HepG2 (cell line): ENCODE measurements at regions of chr3 and their contacts with region 1.

Region 1: DNA sequence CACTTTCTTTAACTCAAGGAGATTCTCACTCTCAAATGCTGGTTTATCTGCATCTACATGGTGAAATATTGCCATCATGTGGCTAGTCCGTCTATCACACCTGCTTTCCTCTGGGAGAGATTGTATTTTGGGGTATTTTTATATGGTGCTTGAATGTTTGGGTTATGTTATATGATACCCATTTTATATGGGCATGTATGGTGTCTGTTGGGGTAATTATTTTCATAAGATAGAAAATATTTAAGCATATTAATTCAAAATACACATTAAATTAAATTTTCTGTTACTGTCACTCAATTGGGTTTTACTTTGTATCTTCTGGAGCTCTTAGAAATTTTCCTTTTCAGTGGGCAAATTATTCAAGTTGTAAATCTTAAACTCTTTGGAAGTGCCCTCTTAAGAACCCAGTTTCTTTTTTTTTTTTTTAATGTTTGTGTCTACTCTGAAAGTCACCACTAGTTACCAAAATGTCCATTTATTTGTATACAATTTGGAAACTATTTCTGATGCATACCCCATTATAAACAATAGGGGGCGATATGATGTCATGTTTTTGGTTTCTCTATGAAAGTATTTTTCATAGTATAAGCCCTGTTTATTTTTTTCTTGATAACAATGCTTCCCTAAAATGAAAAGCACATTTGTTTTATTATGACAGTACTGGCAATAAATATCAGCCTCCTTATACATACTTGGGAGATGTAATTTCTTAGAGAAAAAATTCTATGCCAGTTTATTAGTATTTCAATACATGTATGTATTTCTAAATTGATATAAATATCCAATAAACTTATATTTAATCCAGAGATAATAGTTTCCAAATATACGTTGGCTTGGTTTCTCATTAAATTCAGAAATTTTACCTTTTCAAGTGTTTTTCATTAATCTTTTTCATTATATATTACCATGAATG is 36.1 kb upstream of the PLSCR5 start:
- DNase-seq: peak; percentile 56
- ATAC-seq: peak; percentile 64
- H3K4me3 ChIP-seq: no peak overlapping the region
- H3K27ac ChIP-seq: no peak overlapping the region
- H3K4me1 ChIP-seq: peaks cover 29% of the 10 kb centered on the region
- H3K27me3 ChIP-seq: no peaks in the 10 kb centered on the region
- CTCF ChIP-seq: peak; percentile 79
- EP300 ChIP-seq: no peak
- POLR2A ChIP-seq: no peak
- RAD21 ChIP-seq: peak; percentile 62

Region 2: DNA sequence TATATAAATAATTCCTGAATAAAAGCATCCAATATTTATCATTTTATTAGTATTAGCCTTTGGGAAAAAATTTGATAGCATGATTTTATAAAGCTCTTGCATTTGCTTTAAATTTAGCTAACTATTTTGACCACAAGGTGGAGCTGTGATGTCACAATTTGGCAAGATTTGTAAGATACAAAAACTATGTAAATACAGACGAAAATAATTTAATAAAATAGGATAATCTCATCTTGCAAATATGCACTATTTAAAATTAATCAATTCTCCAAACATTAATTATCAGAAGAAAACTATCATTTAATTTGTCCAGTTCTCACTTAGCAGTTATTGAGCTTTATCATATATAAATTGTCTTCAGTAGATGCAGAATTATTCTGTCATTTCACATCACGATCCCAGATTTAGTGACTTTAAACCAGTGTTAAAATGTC is 575.6 kb before region 1 on chr3:
- CTCF ChIA-PET with region 1: no interaction called
- POLR2A ChIA-PET with region 1: no interaction called
- in situ Hi-C with region 1: no loop called
- intact Hi-C with region 1: loop called (anchors 10 kb)
- DNase-seq: peak; percentile 50
- ATAC-seq: no peak
- H3K4me3 ChIP-seq: no peak overlapping the region
- H3K27ac ChIP-seq: no peak overlapping the region
- H3K4me1 ChIP-seq: no peaks in the 10 kb centered on the region
- H3K27me3 ChIP-seq: no peaks in the 10 kb centered on the region; a peak in 1 of 5 replicates
- CTCF ChIP-seq: peak; percentile 49
- EP300 ChIP-seq: no peak
- POLR2A ChIP-seq: no peak
- RAD21 ChIP-seq: no peak

Region 3: DNA sequence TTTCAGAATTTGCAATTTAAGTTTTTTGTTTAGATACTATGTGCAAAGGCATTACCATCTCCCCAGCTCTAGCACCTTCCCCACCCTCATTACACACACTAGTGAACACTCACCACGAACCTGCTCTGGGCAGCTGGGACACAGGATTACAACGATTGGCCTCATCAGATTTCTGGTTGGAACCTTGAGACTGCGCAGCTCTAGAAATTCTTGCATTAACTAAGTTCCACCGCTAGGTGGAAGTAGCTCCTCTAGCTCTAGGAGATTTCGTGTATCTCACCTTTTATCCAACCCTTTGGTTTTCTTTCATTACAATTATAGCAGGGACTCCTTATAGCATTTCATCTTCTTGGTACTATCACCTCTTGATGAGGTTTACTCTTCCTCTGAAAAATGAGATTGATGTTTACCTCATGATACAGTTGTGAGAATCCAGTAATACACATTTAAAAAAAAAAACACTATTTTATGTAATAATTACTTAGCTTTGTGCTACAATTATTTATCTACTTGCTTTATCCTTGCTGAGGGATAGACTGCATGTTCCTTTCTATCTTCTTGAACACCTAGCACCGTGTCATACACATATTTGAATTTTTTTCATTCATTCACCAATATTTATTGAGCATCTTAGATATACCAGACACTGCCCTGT is 451.6 kb before region 1 on chr3:
- CTCF ChIA-PET with region 1: interaction called, 3 read pairs
- POLR2A ChIA-PET with region 1: no interaction called
- in situ Hi-C with region 1: no loop called
- intact Hi-C with region 1: loop called (anchors 10 kb)
- DNase-seq: peak; percentile 49
- ATAC-seq: peak; percentile 94
- H3K4me3 ChIP-seq: no peak overlapping the region
- H3K27ac ChIP-seq: no peak overlapping the region
- H3K4me1 ChIP-seq: no peaks in the 10 kb centered on the region
- H3K27me3 ChIP-seq: no peaks in the 10 kb centered on the region
- CTCF ChIP-seq: peak; percentile 80
- EP300 ChIP-seq: no peak
- POLR2A ChIP-seq: no peak
- RAD21 ChIP-seq: peak; percentile 56

Region 4: DNA sequence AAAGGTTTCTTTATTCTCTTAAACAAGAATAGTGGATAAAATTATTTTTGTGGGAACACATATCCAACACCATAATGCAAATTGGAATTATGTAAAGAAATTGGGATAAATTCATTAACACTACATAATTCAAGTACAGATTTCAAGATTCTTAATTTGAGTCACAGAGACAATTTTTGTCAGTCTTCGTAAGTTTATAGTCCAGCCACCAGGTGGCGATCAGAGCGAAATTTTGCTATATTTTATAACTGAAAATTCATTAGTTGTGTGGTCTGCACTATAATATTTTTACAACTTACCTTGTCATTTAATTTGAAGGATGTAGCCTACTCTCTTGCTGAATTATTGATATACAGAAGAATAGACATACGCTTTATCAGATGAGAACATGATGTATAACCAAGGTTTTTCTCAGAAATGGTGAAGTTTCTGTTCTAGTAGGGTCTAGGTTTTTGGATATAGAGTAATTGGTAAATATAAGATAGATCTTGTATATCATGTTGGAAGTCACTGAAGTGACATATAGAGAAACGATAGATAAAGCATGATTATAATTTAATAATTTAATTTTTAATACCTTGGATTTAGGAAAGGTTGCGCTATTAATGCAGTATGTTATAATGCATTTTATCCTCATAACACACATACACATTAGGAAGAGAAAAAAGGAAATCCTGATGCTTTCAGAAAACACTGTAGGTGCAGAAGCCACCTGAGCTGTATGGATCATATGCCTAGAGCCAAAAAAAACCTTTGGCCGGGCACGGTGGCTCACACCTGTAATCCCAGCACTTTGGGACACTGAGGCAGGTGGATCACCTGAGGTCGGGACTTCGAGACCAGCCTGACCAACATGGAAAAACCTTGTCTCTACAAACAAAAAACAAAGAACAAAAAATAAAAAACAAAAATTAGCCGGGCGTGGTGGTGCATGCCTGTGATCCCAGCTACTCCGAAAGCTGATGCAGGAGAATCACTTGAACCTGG is 422.0 kb before region 1 on chr3:
- CTCF ChIA-PET with region 1: interaction called, 8 read pairs
- POLR2A ChIA-PET with region 1: interaction called, 6 read pairs
- in situ Hi-C with region 1: no loop called
- intact Hi-C with region 1: loop called (anchors 1 kb)
- DNase-seq: peak; percentile 6
- ATAC-seq: no peak
- H3K4me3 ChIP-seq: no peak overlapping the region; a peak in 2 of 6 replicates
- H3K27ac ChIP-seq: no peak overlapping the region
- H3K4me1 ChIP-seq: peaks cover 45% of the 10 kb centered on the region
- H3K27me3 ChIP-seq: no peaks in the 10 kb centered on the region
- CTCF ChIP-seq: peak; percentile 54
- EP300 ChIP-seq: no peak
- POLR2A ChIP-seq: no peak
- RAD21 ChIP-seq: no peak; the same call in 1 of the 2 replicates

Region 5: DNA sequence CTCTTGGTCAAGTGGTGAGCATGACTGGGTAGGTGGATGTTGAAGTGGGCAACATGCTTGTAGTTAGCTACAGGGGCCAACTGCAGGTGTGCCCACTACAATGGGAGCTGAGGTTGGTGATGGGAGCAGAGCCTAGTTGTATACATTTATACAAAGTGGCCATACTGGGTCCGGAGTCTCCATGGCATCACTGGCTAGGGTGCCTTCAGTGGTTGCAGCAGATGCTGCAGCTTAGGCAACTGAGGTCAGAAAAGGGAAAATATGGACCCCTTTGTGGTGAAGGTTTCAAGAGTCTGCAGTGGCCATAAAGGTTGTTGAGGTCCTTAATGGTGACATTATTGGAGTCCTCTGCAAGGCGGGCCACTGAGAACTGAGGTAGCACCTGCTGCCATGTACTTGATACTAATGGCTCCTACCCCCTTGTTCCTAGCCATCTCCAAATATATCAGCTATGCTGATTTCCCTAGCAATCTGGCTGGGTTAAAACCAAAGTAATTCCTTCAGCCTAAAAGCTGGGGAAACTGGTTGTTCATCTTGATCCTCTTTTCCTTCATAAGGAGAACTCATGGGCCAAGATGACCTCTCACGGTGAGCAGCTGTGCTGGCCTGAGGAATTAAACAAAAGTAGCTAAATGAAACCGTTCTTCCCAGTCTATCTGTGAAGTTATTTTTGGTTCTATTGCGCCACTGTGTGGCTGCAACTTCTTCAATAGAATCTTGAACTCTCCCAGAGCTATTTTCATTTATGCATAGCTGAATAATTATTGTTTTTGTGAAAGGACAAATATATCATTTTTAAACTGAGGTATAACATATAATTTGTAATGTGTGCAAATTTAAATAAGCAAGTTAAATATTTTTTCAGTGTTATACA is 314.3 kb before region 1 on chr3:
- CTCF ChIA-PET with region 1: interaction called, 4 read pairs
- POLR2A ChIA-PET with region 1: no interaction called
- in situ Hi-C with region 1: no loop called
- intact Hi-C with region 1: loop called (anchors 5 kb)
- DNase-seq: peak; percentile 46
- ATAC-seq: peak; percentile 92
- H3K4me3 ChIP-seq: no peak overlapping the region
- H3K27ac ChIP-seq: no peak overlapping the region
- H3K4me1 ChIP-seq: peaks cover 10% of the 10 kb centered on the region; the same call in 1 of the 2 replicates
- H3K27me3 ChIP-seq: no peaks in the 10 kb centered on the region; a peak in 1 of 5 replicates
- CTCF ChIP-seq: peak; percentile 77
- EP300 ChIP-seq: no peak
- POLR2A ChIP-seq: no peak
- RAD21 ChIP-seq: peak; percentile 67

Region 6: GRCh38 chr3:146589899-146590508 is 51.2 kb before region 1 on chr3:
- CTCF ChIA-PET with region 1: interaction called, 104 read pairs
- POLR2A ChIA-PET with region 1: no interaction called
- in situ Hi-C with region 1: no loop called
- intact Hi-C with region 1: loop called (anchors 1 kb)
- DNase-seq: peak; percentile 52
- ATAC-seq: no peak
- H3K4me3 ChIP-seq: no peak overlapping the region
- H3K27ac ChIP-seq: no peak overlapping the region
- H3K4me1 ChIP-seq: peaks cover 16% of the 10 kb centered on the region
- H3K27me3 ChIP-seq: no peaks in the 10 kb centered on the region
- CTCF ChIP-seq: peak; percentile 68
- EP300 ChIP-seq: no peak
- POLR2A ChIP-seq: no peak
- RAD21 ChIP-seq: peak; percentile 25; the same call in 1 of the 2 replicates

Region 7: DNA sequence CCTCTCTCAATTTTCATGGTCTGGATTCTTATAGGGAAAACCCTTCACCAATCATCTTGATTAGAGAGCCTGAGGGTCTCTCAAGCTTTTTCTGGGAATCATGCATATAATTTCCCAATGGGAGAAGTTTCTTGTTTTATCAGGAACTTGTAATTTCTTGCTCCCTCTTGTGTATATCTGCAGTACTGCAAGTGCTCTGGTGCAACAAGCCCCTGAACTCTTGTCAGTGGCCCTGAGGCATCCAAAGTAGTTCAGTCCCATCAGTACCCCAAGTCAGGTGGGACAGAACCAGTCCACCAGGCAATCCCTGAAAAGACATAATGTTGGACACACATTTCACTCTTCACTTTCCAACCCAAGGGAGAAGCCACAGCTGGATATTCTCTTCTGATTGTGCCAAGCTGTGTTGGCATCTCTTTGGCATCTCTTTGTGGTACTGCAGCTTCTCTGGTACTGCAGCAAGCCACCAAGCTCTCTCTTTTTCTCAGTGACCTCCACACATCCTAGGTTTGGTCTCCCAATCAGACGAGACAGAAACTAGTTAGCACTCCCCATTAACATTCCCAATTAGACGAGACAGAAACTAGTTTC is 550.7 kb after region 1 on chr3:
- CTCF ChIA-PET with region 1: no interaction called
- POLR2A ChIA-PET with region 1: no interaction called
- in situ Hi-C with region 1: no loop called
- intact Hi-C with region 1: loop called (anchors 2 kb)
- DNase-seq: peak; percentile 64
- ATAC-seq: peak; percentile 83
- H3K4me3 ChIP-seq: no peak overlapping the region
- H3K27ac ChIP-seq: no peak overlapping the region
- H3K4me1 ChIP-seq: peaks cover 18% of the 10 kb centered on the region
- H3K27me3 ChIP-seq: no peaks in the 10 kb centered on the region
- CTCF ChIP-seq: peak; percentile 83
- EP300 ChIP-seq: no peak
- POLR2A ChIP-seq: no peak
- RAD21 ChIP-seq: peak; percentile 80